Endothelial cell of umbilical vein (primary cell): ENCODE measurements at regions of chr7 and their contacts with region 1.

Region 1: GRCh38 chr7:75914730-75915585 is at the start of gene POR:
- DNase-seq: peak; percentile 94
- H3K4me3 ChIP-seq: peak within 1 kb of the TSS; percentile 69 to 85 (median 82)
- H3K27ac ChIP-seq: peak within 1 kb of the TSS; percentile 28
- H3K4me1 ChIP-seq: peaks cover 8% of the 10 kb centered on the region
- H3K27me3 ChIP-seq: no peaks in the 10 kb centered on the region
- CTCF ChIP-seq: no peak
- POLR2A ChIP-seq: peak; percentile 99
- total RNA-seq, gene POR: 71.9 and 73.6 TPM in 2 replicates

Region 2: DNA sequence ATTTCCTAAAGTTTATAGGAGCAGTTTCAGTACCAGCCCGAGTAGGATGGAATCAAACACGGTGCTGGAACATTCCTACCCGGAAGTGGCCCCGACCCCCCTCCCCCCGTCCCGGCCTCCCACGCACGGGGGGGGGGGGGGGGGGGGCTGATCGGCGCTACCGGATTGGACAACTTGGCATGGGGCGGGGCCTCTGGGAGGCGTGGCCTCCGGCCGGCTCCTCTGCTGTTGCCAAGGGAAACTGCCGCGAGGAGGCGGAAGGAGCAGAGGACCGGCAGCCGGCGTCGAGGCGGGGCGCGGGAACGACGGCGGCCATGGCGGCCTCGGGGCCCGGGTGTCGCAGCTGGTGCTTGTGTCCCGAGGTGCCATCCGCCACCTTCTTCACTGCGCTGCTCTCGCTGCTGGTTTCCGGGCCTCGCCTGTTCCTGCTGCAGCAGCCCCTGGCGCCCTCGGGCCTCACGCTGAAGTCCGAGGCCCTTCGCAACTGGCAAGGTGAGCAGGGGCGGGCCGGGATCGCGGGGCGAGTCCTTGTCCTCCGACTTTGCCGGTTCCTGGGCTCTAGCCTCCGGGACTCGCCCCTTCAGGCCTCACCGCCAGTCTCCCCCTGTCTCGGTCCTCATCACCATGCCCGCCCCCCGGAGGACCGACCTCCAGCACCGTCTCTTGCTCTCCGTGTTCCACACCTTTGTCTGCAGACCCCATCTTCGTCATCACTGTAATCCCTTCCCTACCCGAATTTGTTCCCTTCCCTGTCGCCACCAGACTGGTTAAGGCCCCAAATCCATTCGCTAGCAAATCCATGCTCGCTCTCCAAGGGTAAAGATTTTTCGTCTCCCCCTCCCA is 36.0 kb before region 1 on chr7 and contains the start of gene RHBDD2:
- CTCF ChIA-PET with region 1: interaction called, 3 read pairs
- POLR2A ChIA-PET with region 1: no interaction called
- dilution Hi-C with region 1: no loop called
- intact Hi-C with region 1: loop called (anchors 1 kb)
- DNase-seq: peak; percentile 91
- H3K4me3 ChIP-seq: peak within 1 kb of the TSS; percentile 26 to 100 (median 72)
- H3K27ac ChIP-seq: peak within 1 kb of the TSS; percentile 4
- H3K4me1 ChIP-seq: peaks cover 11% of the 10 kb centered on the region
- H3K27me3 ChIP-seq: no peaks in the 10 kb centered on the region
- CTCF ChIP-seq: peak in 1 of 2 donors; percentile 11
- POLR2A ChIP-seq: peak; percentile 95
- total RNA-seq, gene RHBDD2: 36.7 and 44.6 TPM in 2 replicates

Region 3: GRCh38 chr7:75985518-75986146 is 70.7 kb after region 1 on chr7:
- CTCF ChIA-PET with region 1: no interaction called
- POLR2A ChIA-PET with region 1: no interaction called
- dilution Hi-C with region 1: no loop called
- intact Hi-C with region 1: no loop called
- DNase-seq: no peak
- H3K4me3 ChIP-seq: no peak overlapping the region
- H3K27ac ChIP-seq: no peak overlapping the region
- H3K4me1 ChIP-seq: no peaks in the 10 kb centered on the region
- H3K27me3 ChIP-seq: no peaks in the 10 kb centered on the region
- CTCF ChIP-seq: no peak
- POLR2A ChIP-seq: no peak